ENCODE measurements at regions of chr4 and their contacts with region 1.

Region 1: DNA sequence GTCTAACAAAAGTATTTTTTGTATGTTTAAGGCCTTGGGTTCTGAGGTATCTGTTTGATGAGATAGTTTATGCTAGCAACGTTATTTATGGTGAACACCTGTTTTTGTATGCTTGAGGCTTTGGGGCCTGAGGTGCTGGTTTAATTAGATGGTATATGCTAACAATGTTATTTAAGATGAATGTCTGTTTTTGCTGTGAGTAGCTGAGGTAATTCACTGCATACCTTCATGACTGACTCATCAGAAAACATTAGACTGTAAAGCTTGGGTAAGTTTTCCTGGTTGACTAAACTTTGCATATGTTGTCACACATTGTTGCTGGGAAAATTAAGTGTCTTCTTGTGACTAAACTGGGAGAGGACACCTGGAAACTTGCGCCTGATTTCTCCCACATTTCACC is 1026.5 kb downstream of the RAPGEF2 start:
- DNase-seq: peak in 1 of 2 experiments; percentile 59
- H3K4me3 ChIP-seq: no peak overlapping the region
- H3K27ac ChIP-seq: 0 out of 2 replicates have a peak overlapping the region, but pooled peaks have one; percentile 37
- H3K4me1 ChIP-seq: 0 out of 2 replicates have a peak, but pooled peaks cover 5% of the 10 kb centered on the region
- H3K27me3 ChIP-seq: no peaks in the 10 kb centered on the region
- CTCF ChIP-seq: no peak

Region 2: GRCh38 chr4:159632031-159632430 is 497.4 kb before region 1 on chr4:
- CTCF ChIA-PET with region 1: no interaction called
- POLR2A ChIA-PET with region 1: no interaction called
- intact Hi-C with region 1: no loop called
- DNase-seq: no peak
- H3K4me3 ChIP-seq: no peak overlapping the region
- H3K27ac ChIP-seq: no peak overlapping the region
- H3K4me1 ChIP-seq: no peaks in the 10 kb centered on the region
- H3K27me3 ChIP-seq: no peaks in the 10 kb centered on the region
- CTCF ChIP-seq: no peak

Region 3: DNA sequence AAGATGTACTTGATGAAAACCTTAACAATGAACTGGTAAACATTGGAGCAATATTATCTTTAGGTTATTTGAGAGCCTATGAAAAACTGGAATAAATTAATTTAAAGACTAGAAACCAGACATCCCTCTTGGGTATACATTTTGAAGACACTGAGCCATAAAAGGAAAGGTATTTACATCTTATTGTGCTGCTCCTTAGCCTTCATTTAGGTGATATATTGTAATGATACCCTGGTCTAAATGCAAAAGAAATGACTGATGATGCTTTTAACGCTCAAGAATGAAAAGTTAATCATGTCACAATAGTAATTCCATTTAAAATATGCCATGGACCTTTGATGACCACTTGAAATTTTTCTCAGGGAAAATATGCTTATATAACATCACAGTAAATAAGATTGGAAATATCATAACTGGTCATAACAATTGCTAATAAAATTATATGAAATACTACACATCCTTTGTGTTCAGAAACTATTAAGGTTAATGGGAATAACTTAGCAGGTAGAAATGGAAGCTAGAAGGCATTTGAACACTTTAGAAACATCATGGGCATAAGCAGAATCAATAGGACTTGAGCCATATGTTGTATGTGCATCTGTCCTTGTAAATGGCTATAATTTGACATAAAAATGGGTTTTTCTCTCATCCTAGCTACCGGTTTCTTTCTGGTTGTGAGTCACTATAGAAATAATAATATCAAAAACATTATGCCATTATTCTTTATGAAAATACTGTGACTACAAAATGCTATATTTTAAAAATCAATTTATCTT is 46.8 kb before region 1 on chr4:
- CTCF ChIA-PET with region 1: no interaction called
- POLR2A ChIA-PET with region 1: no interaction called
- intact Hi-C with region 1: no loop called
- DNase-seq: no peak
- H3K4me3 ChIP-seq: no peak overlapping the region
- H3K27ac ChIP-seq: no peak overlapping the region
- H3K4me1 ChIP-seq: no peaks in the 10 kb centered on the region
- H3K27me3 ChIP-seq: no peaks in the 10 kb centered on the region
- CTCF ChIP-seq: no peak

Region 4: DNA sequence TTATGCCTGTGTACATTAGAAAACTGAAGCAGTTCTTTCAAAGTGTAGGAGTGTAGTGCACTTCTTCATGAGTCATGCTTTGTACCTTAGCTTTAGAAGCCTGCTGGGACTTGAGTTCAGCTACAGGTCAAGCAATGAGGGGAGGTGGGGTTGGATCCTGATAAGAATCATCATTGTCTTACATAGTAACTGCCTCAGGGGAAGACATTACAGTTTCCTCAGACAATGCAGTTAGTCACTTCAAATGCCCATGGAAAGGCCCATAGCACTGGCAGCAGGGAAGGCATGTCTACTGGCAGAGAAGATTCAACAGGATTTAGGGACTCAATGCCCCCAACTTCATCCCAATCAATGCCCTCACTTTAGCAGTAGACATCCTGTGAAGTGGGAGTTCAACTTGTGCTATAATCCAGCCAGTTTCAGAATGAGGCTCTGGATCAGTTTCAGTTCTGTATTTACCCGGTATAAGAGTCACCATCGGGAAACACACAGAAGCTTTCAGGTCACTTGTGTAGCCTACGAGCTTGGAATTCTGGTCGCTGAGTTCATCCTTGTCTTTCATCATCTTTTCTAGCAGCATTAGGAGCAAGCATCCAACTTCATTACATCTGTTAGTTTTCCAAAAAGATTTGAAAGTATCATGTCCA is 189.9 kb after region 1 on chr4:
- CTCF ChIA-PET with region 1: no interaction called
- POLR2A ChIA-PET with region 1: no interaction called
- intact Hi-C with region 1: loop called (anchors 5 kb)
- DNase-seq: peak; percentile 65 to 91
- H3K4me3 ChIP-seq: peak overlapping the region; percentile 9; the same call in 1 of the 2 replicates
- H3K27ac ChIP-seq: peak overlapping the region; percentile 77
- H3K4me1 ChIP-seq: peaks cover 24% of the 10 kb centered on the region
- H3K27me3 ChIP-seq: no peaks in the 10 kb centered on the region
- CTCF ChIP-seq: no peak

Measured in PC-9 (cell line).